H1 (cell line): ENCODE measurements at regions of chr2 and their contacts with region 1.

Region 1: GRCh38 chr2:106542811-106543259 is 55.7 kb downstream of the CD8B2 start:
- DNase-seq: peak; percentile 43 to 93
- H3K4me3 ChIP-seq: peak overlapping the region in 2 of 4 experiments; percentile 21 to 54; a peak in 4 of 8 replicates
- H3K27ac ChIP-seq: no peak overlapping the region
- H3K4me1 ChIP-seq: no peaks in the 10 kb centered on the region
- H3K27me3 ChIP-seq: no peaks in the 10 kb centered on the region; a peak in 1 of 7 replicates
- CTCF ChIP-seq: peak; percentile 82 to 84 (median 84)
- EP300 ChIP-seq: no peak
- POLR2A ChIP-seq: no peak
- RAD21 ChIP-seq: peak; percentile 91 to 93

Region 2: DNA sequence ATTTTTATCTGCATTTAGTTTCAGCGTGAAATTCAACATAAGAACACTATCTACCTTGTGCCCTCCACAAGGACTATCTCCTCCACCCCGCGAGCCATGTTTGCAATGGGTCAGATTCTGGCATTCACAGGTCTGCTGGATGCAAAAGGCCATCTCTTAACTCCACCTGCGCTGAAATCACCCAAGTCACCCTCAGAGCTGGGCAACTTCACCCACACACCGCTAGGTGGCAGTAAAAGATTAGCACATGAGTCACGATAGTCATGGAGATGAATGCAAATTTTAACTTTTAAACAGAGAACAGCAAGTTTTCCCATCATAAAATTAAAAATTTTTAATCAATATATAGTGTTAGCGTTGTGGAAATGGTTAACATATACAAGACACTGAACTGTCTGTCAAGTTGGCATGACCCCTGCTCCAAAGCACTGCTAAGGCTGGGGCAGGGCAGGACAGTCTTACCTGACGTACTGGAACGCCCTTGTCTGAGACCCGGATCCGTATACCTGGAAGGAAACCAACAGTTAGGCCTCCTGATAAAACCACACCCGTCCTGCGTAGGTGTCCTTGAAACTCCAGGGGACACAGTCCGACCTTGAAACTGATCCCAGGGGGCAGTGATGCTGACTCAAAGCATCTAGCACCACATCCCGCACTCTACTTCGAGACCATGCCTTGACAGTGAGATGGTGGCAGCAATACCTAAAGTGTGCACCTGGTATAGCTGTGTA is 438.3 kb before region 1 on chr2:
- CTCF ChIA-PET with region 1: interaction called, 17 read pairs
- POLR2A ChIA-PET with region 1: interaction called, 3 read pairs
- DNase-seq: peak; percentile 36 to 67
- H3K4me3 ChIP-seq: no peak overlapping the region
- H3K27ac ChIP-seq: no peak overlapping the region
- H3K4me1 ChIP-seq: no peaks in the 10 kb centered on the region
- H3K27me3 ChIP-seq: no peaks in the 10 kb centered on the region
- CTCF ChIP-seq: peak; percentile 81 to 89 (median 85)
- EP300 ChIP-seq: no peak
- POLR2A ChIP-seq: no peak
- RAD21 ChIP-seq: peak; percentile 96 to 97

Region 3: GRCh38 chr2:106272216-106272807 is 270.5 kb before region 1 on chr2:
- CTCF ChIA-PET with region 1: interaction called, 10 read pairs
- POLR2A ChIA-PET with region 1: no interaction called
- DNase-seq: no peak
- H3K4me3 ChIP-seq: peak overlapping the region in 1 of 4 experiments; percentile 3; a peak in 1 of 8 replicates
- H3K27ac ChIP-seq: peak overlapping the region; percentile 77; the same call in 1 of the 2 replicates
- H3K4me1 ChIP-seq: peaks cover 0 to 18% (median 4%) of the 10 kb centered on the region in 4 experiments; a peak in 5 of 7 replicates
- H3K27me3 ChIP-seq: no peaks in the 10 kb centered on the region; a peak in 1 of 7 replicates
- CTCF ChIP-seq: no peak
- EP300 ChIP-seq: peak in 1 of 2 experiments; percentile 11; a peak in 1 of 3 replicates
- POLR2A ChIP-seq: peak; percentile 66 to 80
- RAD21 ChIP-seq: no peak

Region 4: DNA sequence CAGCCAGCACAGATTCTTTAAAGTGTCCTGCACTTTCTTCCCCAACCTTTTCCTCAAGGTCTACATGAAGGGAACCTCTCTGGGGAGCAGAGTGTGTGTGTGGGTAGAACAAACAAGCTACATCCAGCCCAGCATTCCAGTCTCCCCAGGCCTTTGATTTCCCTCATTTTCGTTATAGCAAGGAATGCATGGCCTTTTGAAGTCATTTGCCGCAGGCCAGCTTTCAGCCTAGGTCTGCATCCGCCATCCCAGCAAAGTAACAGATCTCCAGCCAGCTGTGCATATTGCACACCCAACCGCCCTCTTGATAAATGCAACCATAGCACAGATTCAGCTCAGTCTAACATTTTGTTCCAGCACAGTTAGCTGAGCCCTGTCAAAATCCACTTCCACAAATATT is 11.1 kb before region 1 on chr2:
- CTCF ChIA-PET with region 1: interaction called, 20 read pairs
- POLR2A ChIA-PET with region 1: no interaction called
- DNase-seq: no peak
- H3K4me3 ChIP-seq: no peak overlapping the region
- H3K27ac ChIP-seq: no peak overlapping the region
- H3K4me1 ChIP-seq: no peaks in the 10 kb centered on the region
- H3K27me3 ChIP-seq: no peaks in the 10 kb centered on the region
- CTCF ChIP-seq: no peak
- EP300 ChIP-seq: no peak
- POLR2A ChIP-seq: no peak
- RAD21 ChIP-seq: no peak

Region 5: GRCh38 chr2:106566050-106566449 is 23.2 kb after region 1 on chr2:
- CTCF ChIA-PET with region 1: interaction called, 23 read pairs
- POLR2A ChIA-PET with region 1: no interaction called
- DNase-seq: no peak
- H3K4me3 ChIP-seq: no peak overlapping the region
- H3K27ac ChIP-seq: no peak overlapping the region
- H3K4me1 ChIP-seq: no peaks in the 10 kb centered on the region; a peak in 1 of 7 replicates
- H3K27me3 ChIP-seq: no peaks in the 10 kb centered on the region
- CTCF ChIP-seq: no peak
- EP300 ChIP-seq: no peak
- POLR2A ChIP-seq: no peak
- RAD21 ChIP-seq: no peak

Region 6: DNA sequence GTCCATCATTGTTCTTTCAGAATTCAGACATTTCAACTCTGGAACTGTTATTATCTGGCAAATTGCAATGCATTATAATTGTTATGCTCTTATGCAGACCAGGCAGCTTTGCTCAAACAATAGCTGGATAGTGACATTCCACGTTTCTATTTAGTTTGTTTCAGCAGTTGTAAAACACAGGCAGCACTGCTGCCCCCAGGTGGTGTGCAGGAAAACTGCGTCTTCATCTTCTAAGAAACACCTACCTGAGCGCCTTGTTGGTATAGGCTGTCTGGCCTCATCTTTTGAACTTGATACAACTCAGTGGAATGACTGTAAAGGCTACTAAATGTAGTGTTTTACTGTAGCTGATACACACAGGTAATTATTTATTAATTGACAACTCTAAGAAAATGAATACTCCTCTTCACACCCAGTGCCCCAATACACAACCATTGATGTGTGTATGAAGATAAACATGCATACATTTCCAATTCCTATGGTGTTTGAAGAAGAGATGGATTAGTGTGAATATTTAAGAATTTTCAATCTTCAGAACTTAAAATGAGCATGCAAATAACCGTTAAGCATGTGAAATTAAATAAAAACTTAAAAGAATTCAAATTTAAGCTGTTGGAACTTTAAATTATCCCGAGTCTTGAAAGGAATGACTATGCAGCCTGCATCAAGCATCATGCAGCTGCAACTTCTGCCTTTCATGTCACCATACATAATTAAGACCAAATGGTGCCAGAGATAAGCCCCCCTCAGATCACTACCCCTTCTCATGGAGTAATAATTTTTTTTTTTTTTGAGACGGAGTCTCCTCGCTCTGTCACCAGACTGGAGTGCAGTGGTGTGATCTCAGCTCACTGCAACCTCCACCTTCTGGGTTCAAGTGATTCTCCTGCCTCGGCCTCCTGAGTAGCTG is 30.0 kb after region 1 on chr2:
- CTCF ChIA-PET with region 1: interaction called, 18 read pairs
- POLR2A ChIA-PET with region 1: no interaction called
- DNase-seq: peak in 1 of 2 experiments; percentile 65
- H3K4me3 ChIP-seq: no peak overlapping the region
- H3K27ac ChIP-seq: no peak overlapping the region
- H3K4me1 ChIP-seq: peaks cover 2 to 4% (median 3%) of the 10 kb centered on the region in 4 experiments; a peak in 4 of 7 replicates
- H3K27me3 ChIP-seq: no peaks in the 10 kb centered on the region
- CTCF ChIP-seq: peak; percentile 58 to 84 (median 69)
- EP300 ChIP-seq: no peak
- POLR2A ChIP-seq: no peak
- RAD21 ChIP-seq: peak; percentile 51 to 66

Region 7: GRCh38 chr2:106582148-106583143 is 39.6 kb after region 1 on chr2:
- CTCF ChIA-PET with region 1: interaction called, 10 read pairs
- POLR2A ChIA-PET with region 1: no interaction called
- DNase-seq: peak; percentile 51 to 83
- H3K4me3 ChIP-seq: peak overlapping the region; percentile 20 to 57 (median 39); a peak in 6 of 8 replicates
- H3K27ac ChIP-seq: no peak overlapping the region
- H3K4me1 ChIP-seq: no peaks in the 10 kb centered on the region
- H3K27me3 ChIP-seq: peaks cover 2 to 31% (median 12%) of the 10 kb centered on the region in 4 experiments
- CTCF ChIP-seq: peak; percentile 80 to 94 (median 88)
- EP300 ChIP-seq: no peak
- POLR2A ChIP-seq: no peak
- RAD21 ChIP-seq: peak; percentile 91 to 96

Region 8: DNA sequence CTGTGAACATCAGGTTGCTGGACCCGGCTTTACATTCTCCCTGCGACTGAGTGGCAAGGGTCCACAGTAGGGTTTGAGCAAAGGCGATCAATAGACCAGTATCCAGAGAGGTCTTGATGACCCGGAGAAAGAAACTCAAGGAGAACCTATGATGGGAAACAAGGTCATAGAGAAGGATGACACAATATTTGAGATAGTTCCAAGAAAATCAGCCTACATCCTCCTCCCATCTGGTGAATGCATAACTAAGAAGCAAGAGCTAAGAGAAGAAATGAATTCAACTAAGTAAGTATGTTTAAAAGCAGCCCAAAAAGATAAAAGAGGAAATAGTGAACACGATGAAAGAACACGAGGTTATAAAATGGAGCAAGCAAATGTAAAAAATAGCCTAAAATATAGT is 110.6 kb after region 1 on chr2:
- CTCF ChIA-PET with region 1: no interaction called
- POLR2A ChIA-PET with region 1: no interaction called
- DNase-seq: no peak
- H3K4me3 ChIP-seq: no peak overlapping the region
- H3K27ac ChIP-seq: no peak overlapping the region
- H3K4me1 ChIP-seq: no peaks in the 10 kb centered on the region
- H3K27me3 ChIP-seq: no peaks in the 10 kb centered on the region
- CTCF ChIP-seq: no peak
- EP300 ChIP-seq: no peak
- POLR2A ChIP-seq: no peak
- RAD21 ChIP-seq: no peak